Activated CD4-positive, alpha-beta T cell treated with anti-CD3 and anti-CD28 coated beads for 36 hours (primary cell): ENCODE measurements at regions of chr4 and their contacts with region 1.

Region 1: GRCh38 chr4:21664355-21664754 is 284.2 kb downstream of the KCNIP4 start:
- DNase-seq: no peak
- ATAC-seq: no peak
- H3K4me3 Mint-ChIP-seq: no peak overlapping the region
- H3K27ac Mint-ChIP-seq: no peak overlapping the region
- H3K4me1 Mint-ChIP-seq: no peaks in the 10 kb centered on the region
- H3K27me3 Mint-ChIP-seq: no peaks in the 10 kb centered on the region

Region 2: GRCh38 chr4:20895208-20895607 is 769.1 kb before region 1 on chr4:
- CTCF ChIA-PET with region 1: no interaction called
- POLR2A ChIA-PET with region 1: interaction called, 12 read pairs
- intact Hi-C with region 1: no loop called
- DNase-seq: no peak
- ATAC-seq: no peak
- H3K4me3 Mint-ChIP-seq: no peak overlapping the region
- H3K27ac Mint-ChIP-seq: no peak overlapping the region
- H3K4me1 Mint-ChIP-seq: no peaks in the 10 kb centered on the region
- H3K27me3 Mint-ChIP-seq: no peaks in the 10 kb centered on the region

Region 3: DNA sequence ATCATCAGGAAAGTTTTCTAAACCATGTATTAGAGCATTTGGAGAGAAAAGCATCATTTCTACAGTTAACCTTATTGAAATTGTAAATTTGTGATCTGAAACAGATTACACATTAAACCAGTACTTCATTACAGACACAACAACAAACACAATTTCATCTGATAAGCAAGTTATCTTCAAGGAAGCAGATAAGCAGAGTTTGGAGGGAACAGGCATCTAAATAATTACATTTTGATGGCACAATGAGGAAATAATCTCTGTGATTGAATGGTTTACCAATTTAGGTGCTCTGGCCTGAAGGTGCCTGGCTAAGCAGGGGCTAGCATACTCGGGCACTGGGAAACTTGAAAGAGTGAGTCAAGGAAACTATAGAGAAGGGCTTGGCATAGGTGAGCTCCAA is 344.3 kb before region 1 on chr4:
- CTCF ChIA-PET with region 1: no interaction called
- POLR2A ChIA-PET with region 1: no interaction called
- intact Hi-C with region 1: no loop called
- DNase-seq: no peak
- ATAC-seq: no peak
- H3K4me3 Mint-ChIP-seq: no peak overlapping the region
- H3K27ac Mint-ChIP-seq: no peak overlapping the region
- H3K4me1 Mint-ChIP-seq: no peaks in the 10 kb centered on the region
- H3K27me3 Mint-ChIP-seq: no peaks in the 10 kb centered on the region